ENCODE measurements at regions of chrX and their contacts with region 1.

Region 1: GRCh38 chrX:107627838-107628661 is at the start of gene PRPS1:
- DNase-seq: peak; percentile 91 to 96
- ATAC-seq: peak; percentile 97 to 99
- H3K4me3 ChIP-seq: peak within 1 kb of the TSS; percentile 92
- H3K27ac ChIP-seq: peak within 1 kb of the TSS; percentile 87 to 92
- H3K4me1 ChIP-seq: peaks cover 26% of the 10 kb centered on the region
- CTCF ChIP-seq: no peak
- EP300 ChIP-seq: no peak
- POLR2A ChIP-seq: peak; percentile 55
- RAD21 ChIP-seq: no peak
- polyA plus RNA-seq, gene PRPS1: 125 and 140 TPM in 2 replicates

Region 2: GRCh38 chrX:107537815-107538214 is 90.2 kb before region 1 on chrX:
- CTCF ChIA-PET with region 1: interaction called, 23 read pairs
- POLR2A ChIA-PET with region 1: interaction called, 4 read pairs
- DNase-seq: peak; percentile 21 to 66
- ATAC-seq: peak; percentile 68 to 87; a peak in 5 of 6 replicates
- H3K4me3 ChIP-seq: no peak overlapping the region
- H3K27ac ChIP-seq: no peak overlapping the region
- H3K4me1 ChIP-seq: no peaks in the 10 kb centered on the region
- CTCF ChIP-seq: peak; percentile 59
- EP300 ChIP-seq: no peak
- POLR2A ChIP-seq: no peak
- RAD21 ChIP-seq: peak; percentile 67 to 78

Region 3: GRCh38 chrX:107571296-107571998 is 56.6 kb before region 1 on chrX:
- CTCF ChIA-PET with region 1: no interaction called
- POLR2A ChIA-PET with region 1: interaction called, 15 read pairs
- DNase-seq: peak; percentile 66 to 68
- ATAC-seq: peak; percentile 90 to 95
- H3K4me3 ChIP-seq: no peak overlapping the region
- H3K27ac ChIP-seq: peak overlapping the region; percentile 52 to 69; a peak in 3 of 6 replicates
- H3K4me1 ChIP-seq: peaks cover 21% of the 10 kb centered on the region
- CTCF ChIP-seq: no peak
- EP300 ChIP-seq: no peak
- POLR2A ChIP-seq: no peak
- RAD21 ChIP-seq: no peak

Region 4: GRCh38 chrX:107610667-107611066 is 17.4 kb before region 1 on chrX:
- CTCF ChIA-PET with region 1: no interaction called
- POLR2A ChIA-PET with region 1: no interaction called
- DNase-seq: no peak
- ATAC-seq: no peak
- H3K4me3 ChIP-seq: no peak overlapping the region
- H3K27ac ChIP-seq: no peak overlapping the region
- H3K4me1 ChIP-seq: no peaks in the 10 kb centered on the region
- CTCF ChIP-seq: no peak
- EP300 ChIP-seq: no peak
- POLR2A ChIP-seq: no peak
- RAD21 ChIP-seq: no peak

Region 5: DNA sequence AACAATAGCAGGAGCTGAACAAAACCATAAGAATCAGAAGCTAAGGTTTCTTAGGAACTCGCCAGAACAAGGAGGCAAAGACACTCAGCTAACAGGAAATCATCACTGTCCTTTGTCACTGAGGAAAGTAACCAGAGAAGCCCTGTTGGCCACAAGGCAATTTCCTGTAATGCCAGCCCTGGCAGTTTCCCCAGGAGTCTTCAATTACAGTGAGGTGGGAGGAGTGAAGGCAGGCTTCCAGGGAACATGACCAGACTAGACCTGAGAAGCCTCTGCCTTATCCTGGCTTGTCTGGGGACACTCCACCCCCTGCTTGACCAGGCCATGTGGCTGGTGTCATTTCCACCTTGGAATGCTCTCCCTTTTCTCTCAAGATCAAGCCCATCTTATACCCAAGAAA is 684.9 kb after region 1 on chrX:
- CTCF ChIA-PET with region 1: no interaction called
- POLR2A ChIA-PET with region 1: no interaction called
- DNase-seq: peak; percentile 20 to 72
- ATAC-seq: peak; percentile 25 to 65; a peak in 3 of 6 replicates
- H3K4me3 ChIP-seq: no peak overlapping the region
- H3K27ac ChIP-seq: peak overlapping the region; percentile 84 to 90
- H3K4me1 ChIP-seq: peaks cover 73% of the 10 kb centered on the region
- CTCF ChIP-seq: no peak
- EP300 ChIP-seq: no peak
- POLR2A ChIP-seq: no peak
- RAD21 ChIP-seq: no peak

Measured in A549 (cell line).